ENCODE measurements at regions of chr6 and their contacts with region 1.

Region 1: DNA sequence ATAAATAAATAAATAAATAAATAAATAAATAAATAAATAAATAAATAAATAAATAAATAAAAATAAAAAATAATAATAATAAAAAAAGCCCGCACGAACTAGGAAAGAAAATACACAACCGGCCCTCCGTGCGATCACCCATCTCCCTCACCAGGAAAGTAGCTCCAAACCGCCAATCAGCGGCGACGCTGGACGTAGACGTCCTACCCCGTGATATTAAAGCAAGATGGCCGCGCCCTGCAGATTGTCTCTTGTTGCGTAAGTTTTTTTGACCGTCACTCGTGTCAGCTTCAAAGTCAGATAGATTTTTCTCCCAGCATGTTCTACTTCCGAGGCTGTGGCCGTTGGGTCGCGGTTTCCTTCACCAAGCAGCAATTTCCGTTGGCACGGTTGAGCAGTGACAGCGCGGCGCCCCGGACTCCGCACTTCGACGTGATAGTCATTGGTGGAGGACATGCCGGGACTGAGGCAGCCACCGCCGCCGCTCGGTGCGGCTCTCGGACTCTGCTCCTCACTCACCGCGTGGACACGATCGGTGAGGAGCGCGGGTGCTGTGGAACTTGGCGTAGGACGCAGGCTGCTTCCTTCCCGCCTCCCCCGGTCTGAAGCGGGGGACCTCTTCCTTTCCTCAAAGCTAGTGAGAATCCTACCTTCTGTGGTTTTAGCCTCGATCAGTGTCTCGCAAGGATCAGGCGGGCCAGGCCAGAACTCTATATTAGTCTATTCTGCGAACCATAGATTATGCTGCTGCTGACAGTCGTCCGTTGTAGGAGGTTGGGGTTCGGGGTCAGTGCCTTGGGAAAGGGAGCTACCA is at the start of gene MTO1:
- DNase-seq: peak; percentile 48
- H3K4me3 ChIP-seq: peak within 1 kb of the TSS; percentile 79
- H3K27me3 ChIP-seq: no peaks in the 10 kb centered on the region
- CTCF ChIP-seq: no peak
- polyA plus RNA-seq, gene MTO1: 17.7 and 22.3 TPM in 2 replicates

Region 2: GRCh38 chr6:73476723-73477122 is 15.0 kb after region 1 on chr6:
- CTCF ChIA-PET with region 1: interaction called, 10 read pairs
- POLR2A ChIA-PET with region 1: no interaction called
- DNase-seq: no peak
- H3K4me3 ChIP-seq: no peak overlapping the region
- H3K27me3 ChIP-seq: no peaks in the 10 kb centered on the region
- CTCF ChIP-seq: no peak

Region 3: DNA sequence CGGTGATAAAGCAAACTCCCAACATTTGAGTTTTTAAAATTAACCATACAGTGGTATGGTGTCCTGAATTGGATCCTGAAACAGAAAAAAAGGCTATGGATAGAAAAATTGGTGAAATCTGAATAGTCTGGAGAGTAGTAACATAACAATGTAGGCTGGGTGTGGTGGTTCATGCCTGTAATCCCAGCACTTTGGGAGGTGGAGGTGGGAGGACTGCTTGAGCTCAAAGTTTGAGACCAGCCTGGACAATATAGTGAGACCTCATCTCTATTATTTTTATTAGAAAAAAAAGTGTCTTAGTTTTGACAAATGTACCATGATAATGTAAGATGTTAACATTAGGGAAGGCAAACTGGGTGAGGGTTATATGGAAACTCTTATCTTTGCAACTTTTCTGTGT is 48.1 kb after region 1 on chr6:
- CTCF ChIA-PET with region 1: no interaction called
- POLR2A ChIA-PET with region 1: interaction called, 10 read pairs
- DNase-seq: no peak
- H3K4me3 ChIP-seq: no peak overlapping the region
- H3K27me3 ChIP-seq: no peaks in the 10 kb centered on the region
- CTCF ChIP-seq: no peak

Measured in BJ (cell line).